Brain microvascular endothelial cell (primary cell): ENCODE measurements at regions of chr7 and their contacts with region 1.

Region 1: GRCh38 chr7:17651926-17652385 is 288.3 kb downstream of the SNX13 start:
- DNase-seq: peak; percentile 63
- H3K4me3 ChIP-seq: no peak overlapping the region
- H3K27ac ChIP-seq: peak overlapping the region; percentile 40
- H3K27me3 ChIP-seq: no peaks in the 10 kb centered on the region
- CTCF ChIP-seq: peak; percentile 47

Region 2: GRCh38 chr7:16982640-16983350 is 669.2 kb before region 1 on chr7:
- in situ Hi-C with region 1: loop called (anchors 25 kb)
- DNase-seq: peak; percentile 16
- H3K4me3 ChIP-seq: no peak overlapping the region
- H3K27ac ChIP-seq: no peak overlapping the region
- H3K27me3 ChIP-seq: no peaks in the 10 kb centered on the region
- CTCF ChIP-seq: peak; percentile 90